Adrenal gland (tissue), 19 donors: ENCODE measurements at regions of chr2 and their contacts with region 1.

Region 1: GRCh38 chr2:100625717-100626116 is 62.9 kb downstream of the PDCL3 start:
- DNase-seq: peak in 1 of 7 donors; percentile 20
- H3K4me3 ChIP-seq: no peak overlapping the region
- H3K27ac ChIP-seq: no peak overlapping the region
- H3K4me1 ChIP-seq: no peaks in the 10 kb centered on the region
- H3K27me3 ChIP-seq: no peaks in the 10 kb centered on the region
- CTCF ChIP-seq: no peak
- POLR2A ChIP-seq: no peak

Region 2: GRCh38 chr2:100718065-100718629 is 92.4 kb after region 1 on chr2:
- intact Hi-C with region 1: loop called in 1 of 2 experiments (anchors 10 kb)
- DNase-seq: no peak
- H3K4me3 ChIP-seq: no peak overlapping the region
- H3K27ac ChIP-seq: no peak overlapping the region
- H3K4me1 ChIP-seq: no peaks in the 10 kb centered on the region
- H3K27me3 ChIP-seq: no peaks in the 10 kb centered on the region
- CTCF ChIP-seq: no peak
- POLR2A ChIP-seq: no peak

Region 3: GRCh38 chr2:100752628-100753333 is 127.1 kb after region 1 on chr2:
- intact Hi-C with region 1: no loop called
- DNase-seq: no peak
- H3K4me3 ChIP-seq: no peak overlapping the region
- H3K27ac ChIP-seq: peak overlapping the region in 2 of 5 donors; percentile 25 to 68
- H3K4me1 ChIP-seq: peaks cover 0 to 14% of the 10 kb centered on the region in 2 donors
- H3K27me3 ChIP-seq: no peaks in the 10 kb centered on the region
- CTCF ChIP-seq: no peak
- POLR2A ChIP-seq: no peak